ENCODE measurements at regions of chr3 and their contacts with region 1.

Region 1: GRCh38 chr3:10344147-10344943 is 23.4 kb upstream of the SEC13 start:
- DNase-seq: peak; percentile 81
- CTCF ChIP-seq: peak; percentile 91

Region 2: DNA sequence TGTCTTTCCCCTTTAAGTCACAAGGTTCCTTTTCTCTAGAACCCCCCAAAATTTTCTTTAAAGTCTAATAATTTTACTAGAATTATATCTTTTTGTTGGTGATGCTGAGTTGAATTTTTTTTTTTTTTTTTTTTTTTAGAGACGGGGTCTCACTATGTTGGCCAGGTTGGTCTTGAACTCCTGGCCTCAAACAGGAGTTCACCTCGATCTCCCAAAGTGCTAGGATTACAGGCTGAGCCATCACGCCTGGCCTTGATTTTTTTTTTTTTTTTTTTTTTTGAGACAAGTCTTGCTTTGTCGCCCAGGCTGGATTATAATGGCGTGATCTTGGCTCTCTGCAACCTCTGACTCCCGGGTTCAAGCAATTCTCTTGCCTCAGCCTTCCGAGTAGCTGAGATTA is 35.7 kb before region 1 on chr3:
- CTCF ChIA-PET with region 1: no interaction called
- POLR2A ChIA-PET with region 1: no interaction called
- DNase-seq: no peak
- CTCF ChIP-seq: no peak

Region 3: DNA sequence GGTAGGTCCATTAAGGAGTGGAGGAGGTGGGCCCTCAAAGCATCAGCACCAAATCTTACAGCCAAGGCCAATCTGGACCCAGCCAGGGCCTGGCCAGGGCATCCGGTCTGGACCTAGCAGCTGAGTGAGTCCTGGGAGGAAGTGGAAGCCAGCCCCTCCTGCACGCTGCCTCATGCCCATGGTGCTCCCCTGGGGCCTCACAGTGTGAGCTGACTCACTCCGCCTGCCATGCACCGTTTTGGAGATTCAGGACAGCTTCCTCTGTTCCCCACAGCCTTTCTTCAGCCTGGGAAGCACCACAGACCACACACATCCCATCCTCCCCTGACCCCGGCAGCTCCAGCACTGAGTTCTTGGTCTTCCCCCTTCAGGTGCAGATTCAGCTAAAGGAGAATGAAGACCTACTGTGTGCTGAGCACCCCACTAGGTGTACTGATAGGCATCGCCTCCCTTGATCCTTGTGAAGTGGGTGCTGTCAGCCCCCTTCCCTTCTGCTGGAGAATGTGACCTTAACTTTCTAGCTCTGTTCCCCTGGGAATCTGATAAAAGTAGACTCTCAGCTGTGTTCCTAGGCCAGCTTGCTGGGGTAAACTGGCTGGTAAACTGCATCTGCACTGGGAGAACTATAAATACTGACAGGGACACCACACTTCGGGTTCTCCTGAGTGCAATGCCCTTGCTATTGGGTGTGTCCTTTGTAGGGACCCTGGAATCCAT is 13.4 kb after region 1 on chr3:
- CTCF ChIA-PET with region 1: interaction called, 17 read pairs
- POLR2A ChIA-PET with region 1: no interaction called
- DNase-seq: no peak
- CTCF ChIP-seq: no peak

Region 4: DNA sequence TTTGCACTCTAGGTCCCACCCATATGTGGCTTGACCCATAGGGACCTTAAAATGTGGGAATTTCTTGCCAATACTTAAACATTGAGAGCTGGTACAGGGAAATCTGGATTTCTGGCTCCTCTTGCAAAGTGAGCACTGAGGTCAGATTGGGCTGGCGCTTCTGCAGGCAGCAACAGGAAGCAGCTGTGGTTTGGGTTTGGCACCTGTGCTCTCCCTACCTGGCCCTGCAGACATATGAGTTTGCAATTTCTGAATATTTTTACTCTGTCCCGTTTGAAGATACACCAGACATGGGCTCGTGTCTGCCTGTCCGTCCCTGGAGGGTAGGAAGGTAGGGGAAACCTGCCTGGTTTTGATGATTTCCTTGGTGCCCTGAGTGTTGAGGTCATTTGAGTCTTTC is 51.3 kb after region 1 on chr3:
- CTCF ChIA-PET with region 1: no interaction called
- POLR2A ChIA-PET with region 1: no interaction called
- DNase-seq: no peak
- CTCF ChIP-seq: no peak

Region 5: DNA sequence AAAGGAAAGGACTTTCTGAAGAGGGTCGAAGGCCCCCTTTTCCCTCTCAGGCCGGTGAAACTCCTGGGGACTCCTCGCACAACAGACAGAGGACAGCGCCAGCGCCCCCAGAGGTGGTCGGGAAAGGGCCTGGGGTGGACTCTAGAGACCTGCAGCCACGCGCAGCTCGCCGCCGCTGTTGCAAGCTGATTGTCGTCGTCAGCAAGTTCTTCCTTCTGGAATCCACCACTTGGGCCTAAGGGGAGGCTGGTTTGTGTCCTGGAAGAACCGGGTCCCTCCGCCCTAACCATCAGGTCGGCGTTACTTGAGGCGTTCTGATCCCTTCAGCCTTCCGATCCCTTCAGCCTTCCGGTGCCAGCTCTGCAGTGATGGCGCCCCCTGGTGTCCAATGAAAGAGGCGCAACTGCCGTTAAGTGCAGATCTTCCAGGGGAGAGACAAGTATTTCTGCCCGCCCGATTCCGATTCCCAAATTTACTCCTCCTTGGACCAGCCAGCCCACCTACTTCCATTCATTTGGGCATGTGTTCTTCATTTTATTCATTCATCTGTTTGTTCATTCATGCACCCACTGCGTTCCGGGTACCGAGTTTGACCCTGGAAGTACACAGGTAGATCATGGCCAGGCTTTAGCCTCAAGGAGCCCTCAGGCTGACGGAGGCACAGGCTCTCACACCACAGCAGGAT is 394.5 kb after region 1 on chr3:
- CTCF ChIA-PET with region 1: interaction called, 73 read pairs
- POLR2A ChIA-PET with region 1: no interaction called
- DNase-seq: peak; percentile 62
- CTCF ChIP-seq: peak; percentile 64

Region 6: GRCh38 chr3:10764259-10765051 is 420.1 kb after region 1 on chr3:
- CTCF ChIA-PET with region 1: no interaction called
- POLR2A ChIA-PET with region 1: no interaction called
- DNase-seq: no peak
- CTCF ChIP-seq: no peak

Measured in GM10248 (cell line).